ENCODE measurements at regions of chr16 and their contacts with region 1.

Region 1: GRCh38 chr16:19086322-19087199 is 19.1 kb downstream of the COQ7 start:
- DNase-seq: peak; percentile 58 to 96
- H3K4me3 ChIP-seq: peak overlapping the region in 3 of 4 experiments; percentile 28 to 53 (median 42); a peak in 5 of 8 replicates
- H3K27ac ChIP-seq: no peak overlapping the region
- H3K4me1 ChIP-seq: no peaks in the 10 kb centered on the region; a peak in 1 of 7 replicates
- H3K27me3 ChIP-seq: peaks cover 0 to 10% (median 7%) of the 10 kb centered on the region in 4 experiments; a peak in 5 of 7 replicates
- CTCF ChIP-seq: peak; percentile 79 to 96 (median 88)
- EP300 ChIP-seq: no peak
- POLR2A ChIP-seq: no peak
- RAD21 ChIP-seq: peak; percentile 93 to 98

Region 2: GRCh38 chr16:19005561-19006445 is 80.8 kb before region 1 on chr16:
- CTCF ChIA-PET with region 1: no interaction called
- POLR2A ChIA-PET with region 1: no interaction called
- DNase-seq: peak; percentile 25 to 54
- H3K4me3 ChIP-seq: no peak overlapping the region; a peak in 1 of 8 replicates
- H3K27ac ChIP-seq: 0 out of 2 replicates have a peak overlapping the region, but pooled peaks have one; percentile 58
- H3K4me1 ChIP-seq: peaks cover 0 to 14% (median 5%) of the 10 kb centered on the region in 4 experiments
- H3K27me3 ChIP-seq: no peaks in the 10 kb centered on the region
- CTCF ChIP-seq: no peak
- EP300 ChIP-seq: 0 out of 3 replicates have a peak, but pooled peaks of 1 of the 2 experiments have one; percentile 16
- POLR2A ChIP-seq: no peak
- RAD21 ChIP-seq: no peak

Region 3: GRCh38 chr16:19044769-19045168 is 41.8 kb before region 1 on chr16:
- CTCF ChIA-PET with region 1: no interaction called
- POLR2A ChIA-PET with region 1: no interaction called
- DNase-seq: no peak
- H3K4me3 ChIP-seq: no peak overlapping the region
- H3K27ac ChIP-seq: no peak overlapping the region
- H3K4me1 ChIP-seq: no peaks in the 10 kb centered on the region
- H3K27me3 ChIP-seq: no peaks in the 10 kb centered on the region
- CTCF ChIP-seq: no peak
- EP300 ChIP-seq: no peak
- POLR2A ChIP-seq: no peak
- RAD21 ChIP-seq: no peak

Region 4: GRCh38 chr16:19162085-19162484 is 75.5 kb after region 1 on chr16:
- CTCF ChIA-PET with region 1: interaction called, 19 read pairs
- POLR2A ChIA-PET with region 1: no interaction called
- DNase-seq: no peak
- H3K4me3 ChIP-seq: no peak overlapping the region
- H3K27ac ChIP-seq: no peak overlapping the region
- H3K4me1 ChIP-seq: no peaks in the 10 kb centered on the region; a peak in 1 of 7 replicates
- H3K27me3 ChIP-seq: peaks cover 0 to 5% (median 0%) of the 10 kb centered on the region in 4 experiments; a peak in 2 of 7 replicates
- CTCF ChIP-seq: no peak
- EP300 ChIP-seq: no peak
- POLR2A ChIP-seq: no peak
- RAD21 ChIP-seq: no peak

Region 5: DNA sequence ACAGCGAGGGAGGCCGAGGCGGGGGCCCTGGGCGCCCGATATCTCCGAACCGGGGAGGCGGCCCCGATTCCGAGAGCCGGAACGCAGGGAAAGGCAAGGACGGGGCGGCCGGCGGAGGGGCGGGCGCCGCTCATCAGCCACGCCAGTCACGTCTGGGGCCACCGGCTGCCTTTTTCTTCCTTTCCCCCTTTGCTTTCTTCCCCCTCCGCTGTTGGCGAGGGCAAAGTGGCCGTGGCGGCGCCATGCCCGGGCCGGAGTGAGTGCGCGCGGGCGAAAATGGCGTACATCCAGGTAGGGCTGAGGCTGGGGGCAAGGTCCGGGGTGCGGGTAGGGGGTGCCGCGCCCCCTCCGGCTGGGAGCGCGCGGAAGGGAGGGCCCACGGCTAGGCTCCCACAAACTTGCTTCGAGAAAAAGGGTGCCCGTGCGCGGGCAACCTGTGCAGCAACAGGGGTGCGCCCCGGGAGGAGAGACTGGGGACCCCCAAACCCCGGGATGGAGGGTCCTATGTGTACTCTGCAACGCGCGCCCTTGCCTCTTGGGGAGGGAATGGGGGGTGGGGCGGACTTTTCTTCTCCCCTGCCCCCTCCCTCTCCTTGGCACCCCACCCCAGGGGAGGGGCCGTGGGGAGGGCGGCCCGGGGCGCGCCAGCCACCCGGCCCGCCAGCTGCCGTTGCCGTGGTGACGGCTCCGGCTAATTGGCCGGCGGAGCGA is 82.0 kb after region 1 on chr16:
- CTCF ChIA-PET with region 1: interaction called, 19 read pairs
- POLR2A ChIA-PET with region 1: no interaction called
- DNase-seq: peak in 1 of 2 experiments; percentile 66
- H3K4me3 ChIP-seq: peak overlapping the region; percentile 62 to 82 (median 74)
- H3K27ac ChIP-seq: no peak overlapping the region
- H3K4me1 ChIP-seq: peaks cover 0 to 2% (median 2%) of the 10 kb centered on the region in 4 experiments; a peak in 3 of 7 replicates
- H3K27me3 ChIP-seq: peaks cover 0 to 21% (median 15%) of the 10 kb centered on the region in 4 experiments; a peak in 5 of 7 replicates
- CTCF ChIP-seq: no peak
- EP300 ChIP-seq: no peak
- POLR2A ChIP-seq: no peak
- RAD21 ChIP-seq: no peak

Region 6: GRCh38 chr16:19375561-19376158 is 289.1 kb after region 1 on chr16:
- CTCF ChIA-PET with region 1: interaction called, 16 read pairs
- POLR2A ChIA-PET with region 1: interaction called, 3 read pairs
- DNase-seq: peak in 1 of 2 experiments; percentile 2
- H3K4me3 ChIP-seq: no peak overlapping the region
- H3K27ac ChIP-seq: no peak overlapping the region
- H3K4me1 ChIP-seq: no peaks in the 10 kb centered on the region
- H3K27me3 ChIP-seq: no peaks in the 10 kb centered on the region
- CTCF ChIP-seq: peak; percentile 40 to 89 (median 77)
- EP300 ChIP-seq: no peak
- POLR2A ChIP-seq: no peak
- RAD21 ChIP-seq: peak; percentile 98 to 99